ENCODE measurements at regions of chr6 and their contacts with region 1.

Region 1: DNA sequence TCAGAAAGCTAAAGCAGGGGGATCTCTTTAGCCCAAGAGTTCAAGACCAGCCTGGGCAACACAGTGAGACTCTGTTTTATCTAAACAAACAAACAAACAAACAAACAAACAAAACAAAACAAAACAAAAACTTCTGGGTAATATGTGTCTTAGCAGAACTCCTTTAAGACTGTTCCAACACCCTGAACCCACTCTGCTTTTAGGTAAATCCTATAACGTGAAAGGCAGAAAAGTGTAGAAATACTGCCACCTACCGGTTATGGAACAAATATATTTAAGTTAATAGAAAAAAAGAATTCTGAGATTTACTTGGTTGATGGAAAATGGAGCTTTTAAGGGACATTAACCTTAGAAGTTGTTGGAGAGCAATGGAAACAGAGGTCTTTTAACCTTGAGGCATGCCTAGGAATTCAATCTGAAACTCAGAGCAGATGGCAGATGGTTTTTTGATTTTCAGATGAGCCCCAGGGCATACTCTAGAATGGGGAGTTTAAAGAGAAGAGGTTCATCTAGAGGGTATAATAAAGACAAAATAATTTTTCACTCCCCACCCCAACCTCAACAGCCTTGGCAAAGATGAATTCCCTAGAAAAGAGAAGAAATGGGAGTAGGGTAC is 38.5 kb downstream of the SOD2 start:
- DNase-seq: no peak
- H3K4me3 ChIP-seq: no peak overlapping the region
- H3K27ac ChIP-seq: no peak overlapping the region
- H3K27me3 ChIP-seq: no peaks in the 10 kb centered on the region
- CTCF ChIP-seq: peak; percentile 63 to 91 (median 75)

Region 2: GRCh38 chr6:159169193-159169555 is 485.4 kb before region 1 on chr6 and contains the start of gene FNDC1:
- intact Hi-C with region 1: loop called (anchors 5 kb)
- DNase-seq: no peak
- H3K4me3 ChIP-seq: peak within 1 kb of the TSS in 36 of 59 donors; percentile 2 to 52 (median 28)
- H3K27ac ChIP-seq: no peak within 1 kb of the TSS
- H3K27me3 ChIP-seq: peaks cover 0 to 99% (median 67%) of the 10 kb centered on the region in 45 donors
- CTCF ChIP-seq: peak in 2 of 56 donors; percentile 19 to 21
- total RNA-seq, gene FNDC1: 0.06 to 0.66 (median 0.18) TPM in 79 of 120 experiments, not detected in the others

Region 3: DNA sequence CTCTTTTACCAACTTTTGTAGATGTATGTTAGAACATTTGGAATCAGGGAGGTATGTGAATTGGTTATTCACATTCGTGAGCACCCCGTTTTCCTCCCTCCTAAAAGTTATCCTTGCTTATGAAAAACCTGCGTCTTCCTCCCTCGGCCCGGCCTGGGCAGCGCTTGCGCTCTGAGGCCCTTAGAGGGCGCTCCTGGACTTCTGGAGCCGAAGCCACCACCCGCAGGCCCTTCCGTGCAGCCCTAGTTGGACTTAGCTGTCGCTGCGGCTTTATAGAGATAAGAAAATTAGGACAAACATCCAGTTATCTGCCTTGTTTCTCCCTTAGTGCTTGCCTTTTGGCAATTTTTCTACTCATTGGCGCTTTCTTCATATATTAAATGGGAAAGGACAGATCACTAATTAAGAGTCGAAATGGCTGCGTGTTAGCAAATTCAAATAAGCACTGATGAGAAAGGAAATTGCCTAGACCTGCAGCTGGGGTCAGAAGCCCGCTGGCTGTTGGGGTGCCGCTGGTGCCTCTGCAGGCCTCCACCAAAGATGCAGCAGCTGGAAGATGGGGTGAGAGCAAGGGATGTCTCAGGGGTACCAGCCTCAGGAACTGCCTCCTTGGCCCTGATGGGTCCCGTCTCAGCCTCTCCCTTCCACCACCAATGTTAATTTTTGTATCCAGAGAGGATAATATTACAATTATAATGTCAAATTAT is 480.2 kb before region 1 on chr6:
- intact Hi-C with region 1: loop called (anchors 5 kb)
- DNase-seq: peak; percentile 33 to 79 (median 58)
- H3K4me3 ChIP-seq: peak overlapping the region in 17 of 59 donors; percentile 1 to 49 (median 32)
- H3K27ac ChIP-seq: peak overlapping the region in 1 of 59 donors; percentile 25
- H3K27me3 ChIP-seq: peaks cover 0 to 66% (median 47%) of the 10 kb centered on the region in 45 donors
- CTCF ChIP-seq: peak; percentile 38 to 94 (median 82)

Region 4: DNA sequence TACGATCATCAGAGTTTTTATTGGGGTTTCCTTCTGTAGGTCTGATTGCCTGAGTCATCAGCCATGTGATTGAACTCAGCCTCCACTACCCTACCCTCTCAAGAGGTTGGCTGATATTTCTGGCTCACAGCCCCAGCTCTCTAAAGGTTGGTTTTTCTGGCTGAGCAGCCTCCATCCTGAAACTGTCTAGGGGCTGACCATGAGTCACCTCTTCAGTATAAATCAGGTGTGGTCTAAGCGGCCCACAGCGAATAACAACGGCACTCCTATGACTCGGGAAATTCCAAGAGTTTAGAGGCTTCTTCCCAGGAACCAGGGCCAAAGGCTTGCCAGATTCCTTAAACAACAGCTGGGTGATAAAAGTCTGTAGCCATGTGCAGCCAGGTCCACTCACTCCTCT is 77.0 kb before region 1 on chr6:
- intact Hi-C with region 1: no loop called
- DNase-seq: no peak
- H3K4me3 ChIP-seq: no peak overlapping the region
- H3K27ac ChIP-seq: no peak overlapping the region
- H3K27me3 ChIP-seq: peaks cover 0 to 27% (median 3%) of the 10 kb centered on the region in 45 donors
- CTCF ChIP-seq: no peak